ENCODE measurements at regions of chr4 and their contacts with region 1.

Region 1: GRCh38 chr4:176340871-176341685 is 21.3 kb downstream of the SPCS3 start:
- DNase-seq: peak in 2 of 9 experiments; percentile 59 to 68
- ATAC-seq: peak; percentile 51
- H3K4me3 ChIP-seq: no peak overlapping the region
- H3K4me3 Mint-ChIP-seq: no peak overlapping the region
- H3K27ac ChIP-seq: no peak overlapping the region
- H3K27ac Mint-ChIP-seq: no peak overlapping the region
- H3K4me1 ChIP-seq: no peaks in the 10 kb centered on the region
- H3K4me1 Mint-ChIP-seq: peaks cover 10% of the 10 kb centered on the region
- H3K27me3 ChIP-seq: no peaks in the 10 kb centered on the region
- H3K27me3 Mint-ChIP-seq: no peaks in the 10 kb centered on the region
- CTCF ChIP-seq: peak; percentile 77

Region 2: DNA sequence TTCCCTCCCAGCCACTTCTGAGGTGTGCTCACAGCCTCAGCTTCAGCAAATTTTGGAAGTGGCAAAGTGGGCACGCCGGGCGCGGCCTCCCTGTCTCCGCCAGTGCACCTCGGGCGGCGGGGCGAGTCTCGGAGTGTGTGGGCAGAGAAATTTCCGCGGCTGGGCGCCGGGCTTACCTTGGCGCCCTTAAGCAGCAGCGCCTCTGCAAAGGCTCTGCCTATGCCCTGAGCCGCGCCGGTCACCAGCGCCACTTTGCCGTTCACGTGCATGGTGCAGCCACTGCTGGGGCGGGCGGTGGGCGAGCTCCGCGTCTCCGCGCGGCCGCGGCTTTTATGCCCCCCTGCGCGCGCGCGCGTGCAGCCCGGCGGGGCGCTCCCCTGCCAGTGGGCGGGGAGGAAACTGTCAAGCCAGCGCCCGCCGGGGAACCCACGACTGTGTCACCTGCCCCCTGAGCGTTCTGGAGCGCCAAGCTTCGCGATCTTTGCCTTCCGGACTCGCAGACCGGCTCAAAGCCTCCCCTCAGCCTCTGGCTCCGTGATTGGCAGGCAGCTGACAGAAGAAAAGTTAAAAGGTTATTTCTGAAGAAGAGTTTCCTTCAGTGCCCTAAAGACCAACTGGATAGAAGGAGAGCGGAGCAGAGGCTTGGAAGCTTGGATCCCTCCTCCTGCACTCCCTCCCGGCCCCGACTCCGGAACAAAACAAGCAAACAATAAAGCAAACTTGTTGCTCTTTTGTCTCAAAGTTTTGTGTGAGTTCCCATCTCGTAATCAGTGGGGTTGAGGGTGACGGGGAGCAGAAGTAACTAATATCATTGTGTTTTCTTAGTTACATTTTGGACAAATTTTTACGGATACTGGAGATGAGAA is 1818.7 kb before region 1 on chr4 and contains the start of gene HPGD:
- CTCF ChIA-PET with region 1: no interaction called
- POLR2A ChIA-PET with region 1: no interaction called
- intact Hi-C with region 1: loop called in 1 of 2 experiments (anchors 10 kb)
- DNase-seq: peak; percentile 39 to 87 (median 75)
- ATAC-seq: peak; percentile 95
- H3K4me3 ChIP-seq: peak within 1 kb of the TSS; percentile 61 to 62
- H3K4me3 Mint-ChIP-seq: peak within 1 kb of the TSS; percentile 87
- H3K27ac ChIP-seq: peak within 1 kb of the TSS; percentile 49 to 65
- H3K27ac Mint-ChIP-seq: peak within 1 kb of the TSS; percentile 87
- H3K4me1 ChIP-seq: peaks cover 5% of the 10 kb centered on the region
- H3K4me1 Mint-ChIP-seq: peaks cover 34% of the 10 kb centered on the region
- H3K27me3 ChIP-seq: no peaks in the 10 kb centered on the region
- H3K27me3 Mint-ChIP-seq: peaks cover 17% of the 10 kb centered on the region
- CTCF ChIP-seq: no peak
- total RNA-seq, gene HPGD: 6.1 to 9.1 TPM

Region 3: DNA sequence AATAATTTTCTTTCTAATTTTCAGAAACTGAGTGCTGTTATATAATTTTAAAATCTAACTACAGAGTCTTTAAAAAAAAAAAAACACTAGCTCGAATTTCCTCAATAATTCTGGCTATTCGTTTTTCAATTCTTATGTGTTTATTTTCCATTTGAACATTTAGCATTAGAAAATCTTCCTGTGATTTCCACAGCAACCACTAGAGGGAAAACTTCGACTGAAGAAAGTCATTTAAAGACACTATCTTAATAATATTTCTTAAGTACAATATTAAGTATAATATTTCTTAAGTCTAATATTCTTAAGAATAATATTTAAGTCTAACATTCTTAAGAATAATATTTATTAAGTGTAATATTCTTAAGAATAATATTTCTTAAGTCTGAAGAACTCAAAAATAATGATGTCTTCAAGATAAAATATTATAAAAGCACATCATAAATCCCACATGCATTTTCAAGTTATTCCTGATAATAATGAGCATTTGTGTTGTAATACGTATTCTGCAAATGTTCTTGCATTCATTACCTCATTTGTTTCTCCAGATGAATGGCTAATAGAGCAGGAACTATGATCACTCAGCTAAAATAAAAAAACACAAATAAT is 393.9 kb before region 1 on chr4:
- CTCF ChIA-PET with region 1: interaction called, 4 read pairs
- POLR2A ChIA-PET with region 1: no interaction called
- intact Hi-C with region 1: loop called (anchors 1 kb)
- DNase-seq: peak in 2 of 9 experiments; percentile 15 to 26
- ATAC-seq: no peak
- H3K4me3 ChIP-seq: no peak overlapping the region
- H3K4me3 Mint-ChIP-seq: no peak overlapping the region
- H3K27ac ChIP-seq: no peak overlapping the region
- H3K27ac Mint-ChIP-seq: no peak overlapping the region
- H3K4me1 ChIP-seq: no peaks in the 10 kb centered on the region
- H3K4me1 Mint-ChIP-seq: peaks cover 6% of the 10 kb centered on the region
- H3K27me3 ChIP-seq: no peaks in the 10 kb centered on the region
- H3K27me3 Mint-ChIP-seq: peaks cover 7% of the 10 kb centered on the region
- CTCF ChIP-seq: peak; percentile 69

Region 4: GRCh38 chr4:176150356-176150682 is 190.8 kb before region 1 on chr4:
- CTCF ChIA-PET with region 1: interaction called, 5 read pairs
- POLR2A ChIA-PET with region 1: no interaction called
- intact Hi-C with region 1: loop called (anchors 1 to 2 kb)
- DNase-seq: peak in 2 of 9 experiments; percentile 4 to 19
- ATAC-seq: no peak
- H3K4me3 ChIP-seq: no peak overlapping the region
- H3K4me3 Mint-ChIP-seq: no peak overlapping the region
- H3K27ac ChIP-seq: no peak overlapping the region
- H3K27ac Mint-ChIP-seq: no peak overlapping the region
- H3K4me1 ChIP-seq: no peaks in the 10 kb centered on the region
- H3K4me1 Mint-ChIP-seq: no peaks in the 10 kb centered on the region
- H3K27me3 ChIP-seq: no peaks in the 10 kb centered on the region
- H3K27me3 Mint-ChIP-seq: no peaks in the 10 kb centered on the region
- CTCF ChIP-seq: peak; percentile 23